IMR-90 (cell line): ENCODE measurements at regions of chr14 and their contacts with region 1.

Region 1: GRCh38 chr14:26984311-26985177 is 386.7 kb upstream of the NOVA1 start:
- DNase-seq: peak; percentile 31
- ATAC-seq: peak; percentile 53; the same call in 1 of the 2 replicates
- H3K4me3 ChIP-seq: no peak overlapping the region
- H3K27ac ChIP-seq: no peak overlapping the region
- H3K4me1 ChIP-seq: no peaks in the 10 kb centered on the region
- H3K27me3 ChIP-seq: no peaks in the 10 kb centered on the region
- CTCF ChIP-seq: peak; percentile 52
- POLR2A ChIP-seq: no peak
- RAD21 ChIP-seq: peak; percentile 44

Region 2: DNA sequence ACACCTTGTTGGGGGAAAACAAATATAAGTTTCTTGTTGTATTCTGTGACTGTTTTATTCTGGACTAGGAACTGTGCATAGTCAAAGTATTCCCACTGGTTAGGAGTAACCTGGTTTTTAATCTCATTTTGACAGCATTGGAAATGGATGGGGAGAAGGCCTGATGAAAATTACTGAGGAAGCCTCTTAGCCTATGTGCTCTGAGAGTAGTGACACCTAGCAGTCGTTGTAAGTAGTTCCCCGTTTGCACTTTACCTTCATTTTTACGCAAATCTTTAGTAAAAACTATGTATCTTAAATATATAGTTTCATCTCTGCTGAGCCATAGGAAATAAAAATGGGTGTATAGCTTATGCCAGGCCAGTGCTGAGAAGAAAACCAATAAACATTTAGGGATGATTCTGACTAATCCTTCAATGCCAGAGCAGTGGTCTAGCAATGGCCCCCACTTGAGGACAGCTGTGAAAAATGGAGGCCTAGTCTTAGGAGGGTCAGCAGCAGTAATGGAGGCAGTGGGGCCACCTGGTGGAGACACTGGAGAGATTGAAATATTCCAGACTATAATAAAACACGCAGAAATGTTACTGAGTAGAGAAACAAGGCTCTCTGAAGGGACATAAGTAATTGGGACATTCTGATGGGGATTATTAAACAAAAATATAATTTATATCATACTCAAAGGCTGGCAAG is 253.5 kb before region 1 on chr14:
- CTCF ChIA-PET with region 1: no interaction called
- POLR2A ChIA-PET with region 1: no interaction called
- dilution Hi-C with region 1: no loop called
- in situ Hi-C with region 1: no loop called
- intact Hi-C with region 1: loop called (anchors 10 kb)
- DNase-seq: peak; percentile 3
- ATAC-seq: peak; percentile 57; the same call in 1 of the 2 replicates
- H3K4me3 ChIP-seq: no peak overlapping the region
- H3K27ac ChIP-seq: no peak overlapping the region
- H3K4me1 ChIP-seq: no peaks in the 10 kb centered on the region
- H3K27me3 ChIP-seq: no peaks in the 10 kb centered on the region
- CTCF ChIP-seq: peak; percentile 50
- POLR2A ChIP-seq: no peak
- RAD21 ChIP-seq: peak; percentile 56

Region 3: DNA sequence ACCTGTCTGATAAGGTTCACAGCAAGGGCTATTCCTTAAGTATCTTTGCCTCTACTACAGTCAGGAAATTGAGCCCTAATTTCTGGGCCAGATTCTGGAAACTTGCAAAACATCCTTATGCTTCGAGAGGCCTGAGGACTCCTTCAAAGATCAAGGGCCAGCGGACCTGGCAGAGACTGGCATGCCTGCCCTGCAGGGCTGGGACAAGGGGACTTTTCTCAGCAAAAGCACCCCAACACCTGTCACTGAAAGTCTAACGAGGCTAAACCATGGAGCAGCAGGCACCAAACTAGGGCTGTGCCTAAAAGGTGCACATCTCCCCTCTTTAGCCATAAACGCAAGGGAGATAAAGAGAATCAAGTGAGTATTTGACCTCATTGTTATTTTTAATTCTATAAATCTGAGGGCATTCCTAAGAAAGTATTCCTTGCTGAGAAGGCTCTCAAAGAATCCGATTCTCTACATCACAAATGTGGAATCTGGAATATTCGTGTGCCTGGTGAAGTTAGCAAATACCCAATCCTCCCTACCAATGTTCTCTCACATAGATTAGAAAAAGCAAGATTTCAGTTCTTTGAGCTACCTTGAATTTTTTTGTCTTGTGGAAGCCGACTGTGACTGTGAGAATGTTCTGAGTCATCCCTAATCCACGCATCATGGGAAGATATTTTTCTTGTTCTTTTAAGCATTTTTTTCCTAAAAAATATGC is 58.5 kb before region 1 on chr14:
- CTCF ChIA-PET with region 1: no interaction called
- POLR2A ChIA-PET with region 1: no interaction called
- dilution Hi-C with region 1: no loop called
- in situ Hi-C with region 1: no loop called
- intact Hi-C with region 1: no loop called
- DNase-seq: no peak
- ATAC-seq: no peak
- H3K4me3 ChIP-seq: no peak overlapping the region
- H3K27ac ChIP-seq: no peak overlapping the region
- H3K4me1 ChIP-seq: no peaks in the 10 kb centered on the region
- H3K27me3 ChIP-seq: no peaks in the 10 kb centered on the region
- CTCF ChIP-seq: no peak
- POLR2A ChIP-seq: no peak
- RAD21 ChIP-seq: no peak

Region 4: DNA sequence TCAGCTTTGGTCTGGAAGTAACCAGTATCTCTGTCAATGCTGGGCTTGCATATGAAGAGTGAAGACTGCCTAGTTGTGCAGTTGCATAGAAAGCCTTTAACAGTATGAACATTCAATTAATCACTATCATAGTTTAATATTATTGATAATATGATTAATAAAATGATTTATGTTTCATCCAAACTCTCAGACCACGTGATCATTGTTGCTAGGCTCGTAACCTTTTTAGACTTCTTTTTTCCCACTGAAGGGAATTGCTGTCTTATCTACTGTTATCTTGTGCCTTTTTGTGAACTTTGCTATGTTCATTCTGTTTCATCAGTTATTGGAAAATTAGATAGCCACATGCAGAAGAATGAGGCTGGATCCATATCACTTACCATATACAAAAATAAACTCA is 149.7 kb after region 1 on chr14:
- CTCF ChIA-PET with region 1: no interaction called
- POLR2A ChIA-PET with region 1: no interaction called
- dilution Hi-C with region 1: no loop called
- in situ Hi-C with region 1: no loop called
- intact Hi-C with region 1: no loop called
- DNase-seq: no peak
- ATAC-seq: no peak
- H3K4me3 ChIP-seq: no peak overlapping the region
- H3K27ac ChIP-seq: no peak overlapping the region
- H3K4me1 ChIP-seq: no peaks in the 10 kb centered on the region
- H3K27me3 ChIP-seq: no peaks in the 10 kb centered on the region
- CTCF ChIP-seq: no peak
- POLR2A ChIP-seq: no peak
- RAD21 ChIP-seq: no peak